IMR-90 (cell line): ENCODE measurements at regions of chr3 and their contacts with region 1.

Region 1: GRCh38 chr3:17233398-17233800 is 348.6 kb downstream of the PLCL2 start:
- DNase-seq: peak; percentile 67
- ATAC-seq: peak; percentile 86
- H3K4me3 ChIP-seq: no peak overlapping the region
- H3K27ac ChIP-seq: no peak overlapping the region
- H3K4me1 ChIP-seq: no peaks in the 10 kb centered on the region
- H3K27me3 ChIP-seq: no peaks in the 10 kb centered on the region
- CTCF ChIP-seq: peak; percentile 75
- POLR2A ChIP-seq: no peak
- RAD21 ChIP-seq: peak; percentile 87

Region 2: DNA sequence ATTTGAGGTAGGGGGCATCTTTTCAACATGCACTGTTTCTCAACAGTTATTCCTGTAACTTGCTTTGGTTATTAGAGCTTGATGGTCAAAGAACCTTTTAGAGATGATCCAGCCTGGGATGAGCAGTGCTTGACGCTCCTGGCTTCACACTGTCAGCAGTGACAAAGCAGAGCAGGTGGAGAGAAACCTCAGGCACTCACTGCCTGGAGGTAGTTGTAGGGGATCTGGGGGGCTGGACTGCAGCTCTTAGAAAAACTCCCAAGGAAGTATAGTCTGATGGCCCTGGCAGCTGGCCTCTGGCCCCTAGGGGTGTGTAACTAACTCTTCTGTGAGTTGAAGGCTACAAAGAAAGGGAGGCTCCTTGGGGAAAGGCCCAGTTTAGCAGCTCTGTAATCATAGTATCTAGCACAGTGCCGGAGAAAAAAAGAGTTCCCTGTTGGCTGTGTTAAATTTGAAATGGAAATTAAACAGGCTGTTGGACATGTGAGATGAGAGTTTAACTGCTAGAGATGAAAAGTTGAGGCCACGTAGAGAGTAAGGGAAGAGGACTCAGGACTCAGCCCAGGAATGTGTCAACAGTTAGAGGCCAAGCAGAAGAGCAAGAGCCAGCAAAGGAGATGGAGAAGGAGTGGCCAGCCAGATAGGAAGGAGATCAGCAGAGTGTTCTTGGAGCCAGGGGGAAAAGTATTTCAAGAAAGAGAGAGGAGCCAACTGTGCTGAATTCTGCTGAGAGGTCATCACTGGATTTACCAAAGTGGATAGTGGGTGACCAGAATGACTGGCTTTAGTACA is 954.2 kb before region 1 on chr3:
- CTCF ChIA-PET with region 1: no interaction called
- POLR2A ChIA-PET with region 1: no interaction called
- dilution Hi-C with region 1: no loop called
- in situ Hi-C with region 1: loop called (anchors 25 kb)
- intact Hi-C with region 1: loop called (anchors 10 kb)
- DNase-seq: no peak
- ATAC-seq: no peak
- H3K4me3 ChIP-seq: no peak overlapping the region
- H3K27ac ChIP-seq: no peak overlapping the region
- H3K4me1 ChIP-seq: peaks cover 4% of the 10 kb centered on the region; the same call in 1 of the 2 replicates
- H3K27me3 ChIP-seq: no peaks in the 10 kb centered on the region
- CTCF ChIP-seq: no peak
- POLR2A ChIP-seq: no peak
- RAD21 ChIP-seq: no peak

Region 3: DNA sequence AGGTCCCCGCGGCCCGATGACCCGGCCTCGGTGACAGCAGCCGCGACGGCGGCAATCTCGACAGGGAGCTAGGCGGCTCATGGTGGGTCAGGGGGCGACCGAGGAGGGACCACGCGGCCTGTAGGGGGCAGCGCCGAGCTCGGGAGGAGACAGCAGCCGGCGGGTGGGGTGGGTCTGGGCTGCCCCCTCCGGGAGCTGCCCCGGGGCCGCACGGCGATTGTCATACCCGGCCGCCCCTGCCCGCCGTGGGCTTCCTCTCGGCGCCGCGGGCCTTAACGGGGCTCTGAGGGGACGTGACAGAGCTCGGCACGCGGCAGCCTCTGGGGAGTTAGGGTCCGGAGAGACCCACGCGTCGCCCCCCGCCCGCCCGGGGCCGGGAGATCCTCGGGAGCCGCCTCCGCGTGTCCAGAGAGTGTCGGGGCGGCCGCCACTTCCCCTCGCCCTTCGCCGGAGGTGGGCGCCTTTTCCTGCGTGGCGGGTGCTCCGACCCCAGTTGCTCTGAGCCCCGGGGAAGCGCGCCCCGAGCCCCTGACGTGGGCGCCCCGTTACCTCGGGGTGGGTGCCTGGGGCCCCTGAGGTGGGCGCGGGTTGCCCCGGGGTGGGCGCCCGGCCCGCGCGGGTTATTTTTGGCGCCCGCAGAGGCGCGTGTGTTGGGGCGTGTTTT is 349.2 kb before region 1 on chr3:
- CTCF ChIA-PET with region 1: no interaction called
- POLR2A ChIA-PET with region 1: no interaction called
- dilution Hi-C with region 1: no loop called
- in situ Hi-C with region 1: no loop called
- intact Hi-C with region 1: loop called (anchors 10 kb)
- DNase-seq: peak; percentile 6
- ATAC-seq: peak; percentile 68
- H3K4me3 ChIP-seq: peak overlapping the region; percentile 59
- H3K27ac ChIP-seq: no peak overlapping the region; the same call in 1 of the 2 replicates
- H3K4me1 ChIP-seq: peaks cover 4% of the 10 kb centered on the region; the same call in 1 of the 2 replicates
- H3K27me3 ChIP-seq: peaks cover 4% of the 10 kb centered on the region
- CTCF ChIP-seq: peak; percentile 39
- POLR2A ChIP-seq: no peak
- RAD21 ChIP-seq: peak; percentile 23; the same call in 1 of the 2 replicates

Region 4: GRCh38 chr3:17765819-17766472 is 532.5 kb after region 1 on chr3:
- CTCF ChIA-PET with region 1: no interaction called
- POLR2A ChIA-PET with region 1: no interaction called
- dilution Hi-C with region 1: no loop called
- in situ Hi-C with region 1: no loop called
- intact Hi-C with region 1: no loop called
- DNase-seq: no peak
- ATAC-seq: no peak
- H3K4me3 ChIP-seq: no peak overlapping the region
- H3K27ac ChIP-seq: no peak overlapping the region
- H3K4me1 ChIP-seq: no peaks in the 10 kb centered on the region
- H3K27me3 ChIP-seq: peaks cover 2% of the 10 kb centered on the region; the same call in 1 of the 2 replicates
- CTCF ChIP-seq: no peak
- POLR2A ChIP-seq: no peak
- RAD21 ChIP-seq: no peak